Cardiac septum (tissue), 1 donor: ENCODE measurements at regions of chr15 and their contacts with region 1.

Region 1: DNA sequence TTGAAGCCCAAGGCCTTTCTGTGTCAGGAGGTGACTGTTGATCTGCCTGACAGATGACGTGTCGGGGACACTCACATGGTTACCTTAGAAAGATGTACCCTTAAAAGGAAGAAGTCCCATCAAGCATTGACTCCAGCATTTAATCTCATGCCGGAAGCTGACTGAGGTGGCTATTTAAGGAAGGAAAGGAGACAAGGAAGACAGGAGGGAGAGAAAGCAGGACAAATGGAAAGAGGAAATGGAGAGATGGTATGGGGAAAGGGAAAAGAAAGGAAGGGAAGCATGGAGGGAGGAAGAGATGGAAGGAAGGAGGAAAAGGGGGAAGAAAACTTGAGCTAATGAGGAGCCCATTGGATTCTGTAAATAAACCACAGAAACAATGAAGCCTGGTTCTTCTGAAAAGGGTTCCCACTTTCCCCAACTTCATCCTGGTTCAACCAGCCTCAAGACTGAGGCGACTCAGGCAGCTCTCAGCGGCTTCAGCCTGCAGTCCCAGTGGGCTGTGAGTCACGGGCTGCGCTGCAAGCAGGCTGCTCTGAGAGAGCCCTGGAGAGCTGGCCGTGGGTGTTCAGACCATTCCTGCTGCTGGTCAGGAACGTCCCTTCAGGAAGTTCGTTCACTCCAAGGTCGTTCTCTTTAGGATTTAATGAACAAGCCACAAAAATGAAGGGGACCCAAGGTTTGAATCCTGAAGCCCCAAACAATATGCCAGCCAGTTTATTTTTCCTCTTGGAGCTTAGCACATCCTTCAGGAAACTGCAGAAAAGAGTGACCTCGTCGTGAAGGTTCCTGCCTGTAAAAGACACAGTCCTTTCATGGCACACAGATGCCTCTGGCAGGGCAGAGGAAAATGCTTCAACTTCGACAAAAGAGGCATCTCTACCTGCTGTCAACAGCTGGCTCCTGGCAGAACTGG is 69.6 kb upstream of the THBS1 start:
- DNase-seq: no peak

Region 2: DNA sequence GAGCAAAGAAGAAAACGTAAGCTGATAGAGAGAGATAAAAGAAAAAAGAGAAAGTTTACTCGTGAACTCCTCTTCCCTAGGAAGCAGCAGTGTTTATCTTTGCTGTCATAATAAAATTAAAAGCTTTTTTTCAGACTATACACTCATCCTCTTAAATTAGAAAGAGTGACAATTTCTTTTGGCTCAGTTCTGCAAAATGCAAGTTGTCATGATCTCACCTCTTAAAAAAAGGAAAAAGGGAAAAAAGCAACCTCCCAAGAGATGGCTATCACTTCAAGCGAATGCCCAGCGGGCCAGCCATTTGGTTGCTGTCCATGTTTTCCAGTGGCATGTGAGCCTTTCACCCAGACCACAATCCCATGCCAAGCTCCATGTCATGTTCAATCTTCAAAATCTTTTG is 62.6 kb after region 1 on chr15:
- intact Hi-C with region 1: loop called (anchors 5 kb)
- DNase-seq: no peak

Region 3: GRCh38 chr15:39874890-39875549 is 363.8 kb after region 1 on chr15:
- intact Hi-C with region 1: no loop called
- DNase-seq: no peak